Endothelial cell of umbilical vein (primary cell): ENCODE measurements at regions of chr2 and their contacts with region 1.

Region 1: GRCh38 chr2:226984750-226985582 is 149.1 kb downstream of the RHBDD1 start:
- DNase-seq: peak; percentile 57
- H3K4me3 ChIP-seq: no peak overlapping the region
- H3K27ac ChIP-seq: no peak overlapping the region
- H3K4me1 ChIP-seq: no peaks in the 10 kb centered on the region
- H3K27me3 ChIP-seq: no peaks in the 10 kb centered on the region
- CTCF ChIP-seq: peak; percentile 32 to 42
- POLR2A ChIP-seq: no peak

Region 2: GRCh38 chr2:225889446-225889850 is 1095.5 kb before region 1 on chr2:
- CTCF ChIA-PET with region 1: interaction called, 13 read pairs
- POLR2A ChIA-PET with region 1: no interaction called
- dilution Hi-C with region 1: no loop called
- intact Hi-C with region 1: loop called (anchors 1 kb)
- DNase-seq: peak; percentile 25
- H3K4me3 ChIP-seq: no peak overlapping the region
- H3K27ac ChIP-seq: no peak overlapping the region
- H3K4me1 ChIP-seq: no peaks in the 10 kb centered on the region
- H3K27me3 ChIP-seq: no peaks in the 10 kb centered on the region
- CTCF ChIP-seq: peak; percentile 21 to 40
- POLR2A ChIP-seq: no peak

Region 3: DNA sequence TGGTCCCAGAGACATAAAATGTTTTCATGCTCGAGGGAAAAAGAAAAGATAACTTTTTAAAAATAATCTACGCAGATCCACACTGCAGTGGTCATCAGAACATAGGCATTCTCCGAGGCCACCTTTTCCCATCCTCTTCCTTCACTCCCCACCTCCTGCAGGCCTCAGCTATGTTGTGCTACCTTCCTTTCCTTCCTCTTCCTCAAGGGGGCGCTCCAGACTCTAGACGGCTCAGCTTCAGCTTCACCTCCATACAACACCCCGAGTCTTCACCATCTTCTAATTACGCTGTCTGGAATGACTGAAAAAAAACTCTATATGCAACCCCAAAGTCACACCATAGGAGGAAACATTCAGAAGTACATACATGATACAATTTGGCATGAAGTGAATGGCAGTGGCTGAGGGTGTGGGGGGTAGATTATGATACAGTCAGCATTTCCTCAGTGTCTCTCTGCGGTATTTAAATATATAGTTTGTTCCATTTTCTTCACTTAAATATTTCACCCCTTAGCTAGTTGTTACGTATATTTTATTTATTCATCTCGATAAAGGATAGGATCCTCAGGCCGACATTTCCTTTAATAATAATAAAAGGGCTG is 769.0 kb before region 1 on chr2:
- CTCF ChIA-PET with region 1: interaction called, 3 read pairs
- POLR2A ChIA-PET with region 1: no interaction called
- dilution Hi-C with region 1: no loop called
- intact Hi-C with region 1: loop called (anchors 2 kb)
- DNase-seq: peak; percentile 10
- H3K4me3 ChIP-seq: no peak overlapping the region
- H3K27ac ChIP-seq: no peak overlapping the region
- H3K4me1 ChIP-seq: peaks cover 3% of the 10 kb centered on the region
- H3K27me3 ChIP-seq: no peaks in the 10 kb centered on the region
- CTCF ChIP-seq: peak; percentile 23 to 34
- POLR2A ChIP-seq: no peak

Region 4: DNA sequence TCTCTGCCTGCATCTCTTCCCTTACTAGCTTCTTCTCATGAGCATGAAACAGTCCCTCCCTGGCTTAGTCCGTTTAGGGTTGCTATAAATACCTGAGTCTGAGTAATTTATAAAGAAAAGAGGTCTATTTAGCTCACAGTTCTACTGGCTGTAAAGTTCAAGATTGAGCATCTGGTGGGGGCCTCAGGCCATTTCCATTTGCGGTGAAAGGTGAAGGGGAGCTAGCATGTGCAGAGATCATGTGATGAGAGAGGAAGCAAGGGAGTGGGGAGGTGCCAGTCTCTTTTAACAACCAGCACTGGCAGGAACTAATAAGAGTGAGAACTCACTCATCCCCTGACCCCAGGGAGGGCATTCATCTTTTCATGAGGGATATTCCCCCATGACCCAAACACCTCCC is 122.3 kb before region 1 on chr2:
- CTCF ChIA-PET with region 1: no interaction called
- POLR2A ChIA-PET with region 1: no interaction called
- dilution Hi-C with region 1: no loop called
- intact Hi-C with region 1: no loop called
- DNase-seq: no peak
- H3K4me3 ChIP-seq: no peak overlapping the region
- H3K27ac ChIP-seq: no peak overlapping the region
- H3K4me1 ChIP-seq: no peaks in the 10 kb centered on the region
- H3K27me3 ChIP-seq: no peaks in the 10 kb centered on the region
- CTCF ChIP-seq: no peak
- POLR2A ChIP-seq: no peak